Left ventricle myocardium inferior (tissue), 1 donor: ENCODE measurements at regions of chr15 and their contacts with region 1.

Region 1: DNA sequence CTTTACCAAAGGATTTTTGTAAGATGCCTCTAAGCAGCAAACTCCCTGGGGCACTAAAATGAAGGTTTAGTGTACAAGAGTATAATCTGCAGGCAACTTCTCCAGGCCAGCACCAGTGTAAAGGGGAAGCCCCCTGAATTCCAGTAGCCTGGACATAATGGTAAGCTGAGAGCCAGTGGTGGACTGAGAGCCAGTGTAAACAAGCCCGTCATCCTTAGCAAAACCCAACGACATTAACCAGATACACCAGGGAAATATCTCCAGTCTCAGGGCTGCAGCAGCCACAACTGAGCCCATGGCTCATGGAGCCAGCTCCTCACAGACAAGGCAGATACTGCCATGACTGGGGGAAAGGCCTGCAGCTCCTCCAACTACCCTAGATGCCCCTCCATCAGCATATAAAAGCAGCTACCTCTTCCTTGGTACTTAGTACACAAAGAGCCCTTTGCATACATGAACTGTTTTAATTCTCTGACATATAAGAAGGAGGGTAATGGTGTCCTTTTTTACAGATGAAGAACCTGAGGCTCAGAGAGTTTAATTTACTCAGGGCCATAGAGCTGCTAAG is 21.7 kb downstream of the PARP16 start:
- DNase-seq: no peak
- H3K4me3 ChIP-seq: no peak overlapping the region
- H3K27ac ChIP-seq: peak overlapping the region; percentile 31
- H3K4me1 ChIP-seq: peaks cover 4% of the 10 kb centered on the region
- H3K27me3 ChIP-seq: no peaks in the 10 kb centered on the region
- CTCF ChIP-seq: no peak

Region 2: DNA sequence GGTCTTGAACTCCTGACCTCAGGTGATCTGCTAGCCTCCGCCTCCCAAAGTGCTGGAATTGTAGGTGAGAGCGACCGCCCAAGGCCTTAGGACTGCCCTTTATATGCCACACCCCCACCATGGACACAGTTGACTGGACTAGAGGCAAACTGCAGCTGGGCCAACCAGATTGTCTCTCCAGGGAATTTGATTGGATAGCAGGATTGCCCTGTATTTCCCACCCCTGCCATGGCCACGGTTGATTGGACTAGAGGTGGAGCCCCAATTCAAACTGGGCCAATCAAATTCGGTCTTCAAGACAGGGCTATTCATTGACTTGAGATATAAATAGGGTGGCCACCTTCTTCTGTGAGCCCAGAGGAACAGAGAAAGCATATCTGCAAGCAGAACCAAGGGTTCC is 72.9 kb before region 1 on chr15:
- intact Hi-C with region 1: loop called (anchors 10 kb)
- DNase-seq: no peak
- H3K4me3 ChIP-seq: no peak overlapping the region
- H3K27ac ChIP-seq: no peak overlapping the region
- H3K4me1 ChIP-seq: peaks cover 7% of the 10 kb centered on the region
- H3K27me3 ChIP-seq: no peaks in the 10 kb centered on the region
- CTCF ChIP-seq: no peak

Region 3: DNA sequence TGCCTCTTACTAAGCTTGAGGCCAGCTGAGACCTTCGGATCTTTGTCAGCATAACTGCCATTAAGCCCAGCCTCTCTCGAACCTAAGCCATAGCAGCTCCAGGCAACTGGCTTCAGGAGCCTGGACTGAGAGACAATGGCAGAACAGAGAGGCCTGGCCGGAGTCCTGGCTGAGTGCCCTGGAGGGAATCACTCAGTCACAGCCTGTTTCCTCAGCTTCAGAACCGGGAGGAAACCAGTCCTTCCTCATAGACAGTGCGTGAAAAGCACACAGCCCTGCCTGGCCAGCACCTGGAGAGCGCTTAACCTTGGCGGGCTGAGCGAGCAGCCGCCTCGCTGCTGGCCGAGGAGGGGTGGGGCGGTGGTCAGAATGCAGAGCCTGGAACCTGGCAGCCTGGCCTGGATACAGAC is 61.2 kb after region 1 on chr15:
- intact Hi-C with region 1: no loop called
- DNase-seq: peak; percentile 39
- H3K4me3 ChIP-seq: no peak overlapping the region
- H3K27ac ChIP-seq: no peak overlapping the region
- H3K4me1 ChIP-seq: peaks cover 19% of the 10 kb centered on the region
- H3K27me3 ChIP-seq: peaks cover 5% of the 10 kb centered on the region
- CTCF ChIP-seq: no peak

Region 4: GRCh38 chr15:65466901-65467300 is 202.0 kb after region 1 on chr15:
- intact Hi-C with region 1: no loop called
- DNase-seq: no peak
- H3K4me3 ChIP-seq: no peak overlapping the region
- H3K27ac ChIP-seq: no peak overlapping the region
- H3K4me1 ChIP-seq: no peaks in the 10 kb centered on the region
- H3K27me3 ChIP-seq: no peaks in the 10 kb centered on the region
- CTCF ChIP-seq: no peak

Region 5: GRCh38 chr15:65920825-65921309 is 655.9 kb after region 1 on chr15:
- intact Hi-C with region 1: no loop called
- DNase-seq: no peak
- H3K4me3 ChIP-seq: no peak overlapping the region
- H3K27ac ChIP-seq: no peak overlapping the region
- H3K4me1 ChIP-seq: peaks cover 25% of the 10 kb centered on the region
- H3K27me3 ChIP-seq: no peaks in the 10 kb centered on the region
- CTCF ChIP-seq: no peak